GM10248 (cell line): ENCODE measurements at regions of chr2 and their contacts with region 1.

Region 1: DNA sequence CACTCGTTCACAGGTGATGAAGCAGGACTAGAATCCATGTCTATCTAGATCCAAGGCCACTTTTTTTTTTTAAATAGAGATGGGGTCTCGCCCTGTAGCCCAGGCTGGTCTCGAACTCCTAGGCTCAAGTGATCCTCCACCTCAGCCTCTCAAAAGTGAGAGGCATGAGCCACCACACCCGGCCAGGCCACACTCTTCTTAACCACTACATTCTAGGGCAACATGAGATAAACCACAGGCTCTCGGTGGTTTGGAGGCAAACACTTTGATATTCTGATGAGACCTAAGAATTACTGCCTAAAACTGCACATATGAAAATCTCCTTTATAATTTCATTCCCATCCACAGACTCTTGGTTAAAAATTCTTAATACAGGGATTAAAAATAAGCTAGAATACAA is 51.8 kb downstream of the USP34 start:
- DNase-seq: no peak
- CTCF ChIP-seq: no peak

Region 2: GRCh38 chr2:61405813-61406212 is 13.3 kb before region 1 on chr2:
- CTCF ChIA-PET with region 1: interaction called, 11 read pairs
- POLR2A ChIA-PET with region 1: no interaction called
- DNase-seq: no peak
- CTCF ChIP-seq: no peak

Region 3: DNA sequence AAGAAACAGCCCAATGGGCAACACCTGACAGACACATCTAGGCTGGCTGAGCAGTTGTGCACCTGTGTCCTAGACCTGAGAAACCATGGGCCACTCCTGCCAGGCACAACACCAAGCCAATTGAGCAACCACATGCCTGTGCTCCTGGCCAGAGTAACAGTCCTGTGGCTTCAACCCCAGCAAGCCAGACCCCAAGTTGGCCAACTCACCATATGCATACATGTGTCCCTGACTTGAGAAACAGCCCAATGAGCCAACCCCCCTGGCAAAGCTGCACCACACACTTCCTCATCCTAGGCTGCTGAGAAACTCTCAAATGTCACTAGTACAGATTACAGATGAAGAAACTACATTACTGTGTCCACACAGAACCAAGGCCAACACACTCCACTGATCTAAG is 15.2 kb after region 1 on chr2:
- CTCF ChIA-PET with region 1: interaction called, 14 read pairs
- POLR2A ChIA-PET with region 1: no interaction called
- DNase-seq: no peak
- CTCF ChIP-seq: no peak

Region 4: GRCh38 chr2:61520261-61520660 is 101.1 kb after region 1 on chr2:
- CTCF ChIA-PET with region 1: no interaction called
- POLR2A ChIA-PET with region 1: no interaction called
- DNase-seq: no peak
- CTCF ChIP-seq: no peak